Activated CD4-positive, alpha-beta T cell treated with anti-CD3 and anti-CD28 coated beads, Interleukin-2, amount 10 ng/mL, durations not matched to agents 24 days and 14 days (primary cell): ENCODE measurements at regions of chr16 and their contacts with region 1.

Region 1: GRCh38 chr16:2429034-2429770 is at the start of gene CCNF:
- DNase-seq: peak; percentile 99
- H3K4me3 Mint-ChIP-seq: peak within 1 kb of the TSS; percentile 91
- H3K27ac Mint-ChIP-seq: peak within 1 kb of the TSS; percentile 69
- H3K4me1 Mint-ChIP-seq: peaks cover 30% of the 10 kb centered on the region
- H3K27me3 Mint-ChIP-seq: no peaks in the 10 kb centered on the region
- total RNA-seq, gene CCNF: 44.7 and 45.7 TPM in 2 replicates

Region 2: GRCh38 chr16:2194852-2195321 is 234.3 kb before region 1 on chr16:
- intact Hi-C with region 1: loop called (anchors 10 kb)
- DNase-seq: peak; percentile 83
- H3K4me3 Mint-ChIP-seq: peak overlapping the region; percentile 42
- H3K27ac Mint-ChIP-seq: no peak overlapping the region
- H3K4me1 Mint-ChIP-seq: peaks cover 2% of the 10 kb centered on the region
- H3K27me3 Mint-ChIP-seq: peaks cover 34% of the 10 kb centered on the region

Region 3: DNA sequence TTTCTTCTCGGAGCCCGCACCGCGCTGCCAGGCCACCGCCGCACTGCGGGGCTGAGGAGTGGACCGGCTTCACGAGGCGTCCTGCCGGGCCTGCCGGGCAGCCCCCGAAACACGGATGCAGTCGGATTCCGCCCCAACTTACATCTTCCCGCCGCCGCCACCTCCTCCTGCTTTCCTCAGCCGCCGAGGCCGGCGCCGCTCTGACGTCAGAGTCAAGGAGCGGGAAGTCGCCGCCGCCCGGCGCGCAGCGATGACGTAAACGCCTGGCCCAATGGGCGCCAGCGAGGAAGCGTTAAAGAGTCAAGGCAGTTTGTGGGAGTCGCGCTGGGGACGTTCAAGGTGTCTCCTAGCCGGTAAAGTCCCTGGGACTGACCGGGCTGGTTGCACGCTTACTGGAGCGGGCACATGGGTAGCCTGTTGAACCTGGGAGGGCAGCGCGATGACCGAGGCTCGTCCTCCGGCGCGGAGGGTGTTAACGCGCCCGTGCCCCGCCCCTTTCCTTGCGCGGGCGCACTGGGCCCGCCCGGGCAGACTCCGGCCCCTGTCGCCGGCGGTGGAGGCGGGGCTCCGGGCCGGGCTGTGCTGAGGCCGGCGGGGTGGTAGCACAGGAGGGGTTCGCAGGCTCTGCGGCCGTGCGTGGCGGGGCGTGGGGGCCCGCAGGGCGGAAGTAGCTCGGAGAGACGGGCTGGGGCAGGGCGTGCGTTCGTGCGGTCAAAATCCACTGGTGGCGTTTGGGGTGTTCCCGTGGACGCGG is 161.1 kb before region 1 on chr16 and contains the start of gene RNPS1:
- intact Hi-C with region 1: loop called (anchors 2 kb)
- DNase-seq: peak; percentile 99
- H3K4me3 Mint-ChIP-seq: peak within 1 kb of the TSS; percentile 94
- H3K27ac Mint-ChIP-seq: peak within 1 kb of the TSS; percentile 97
- H3K4me1 Mint-ChIP-seq: peaks cover 27% of the 10 kb centered on the region
- H3K27me3 Mint-ChIP-seq: peaks cover 1% of the 10 kb centered on the region
- total RNA-seq, gene RNPS1: 399 and 416 TPM in 2 replicates

Region 4: GRCh38 chr16:2474877-2475412 is 45.7 kb after region 1 on chr16 and contains the start of gene TBC1D24:
- intact Hi-C with region 1: loop called (anchors 5 kb)
- DNase-seq: peak; percentile 95
- H3K4me3 Mint-ChIP-seq: peak within 1 kb of the TSS; percentile 80
- H3K27ac Mint-ChIP-seq: peak within 1 kb of the TSS; percentile 77
- H3K4me1 Mint-ChIP-seq: peaks cover 12% of the 10 kb centered on the region
- H3K27me3 Mint-ChIP-seq: peaks cover 25% of the 10 kb centered on the region
- total RNA-seq, gene TBC1D24: 16.6 and 20.9 TPM in 2 replicates

Region 5: DNA sequence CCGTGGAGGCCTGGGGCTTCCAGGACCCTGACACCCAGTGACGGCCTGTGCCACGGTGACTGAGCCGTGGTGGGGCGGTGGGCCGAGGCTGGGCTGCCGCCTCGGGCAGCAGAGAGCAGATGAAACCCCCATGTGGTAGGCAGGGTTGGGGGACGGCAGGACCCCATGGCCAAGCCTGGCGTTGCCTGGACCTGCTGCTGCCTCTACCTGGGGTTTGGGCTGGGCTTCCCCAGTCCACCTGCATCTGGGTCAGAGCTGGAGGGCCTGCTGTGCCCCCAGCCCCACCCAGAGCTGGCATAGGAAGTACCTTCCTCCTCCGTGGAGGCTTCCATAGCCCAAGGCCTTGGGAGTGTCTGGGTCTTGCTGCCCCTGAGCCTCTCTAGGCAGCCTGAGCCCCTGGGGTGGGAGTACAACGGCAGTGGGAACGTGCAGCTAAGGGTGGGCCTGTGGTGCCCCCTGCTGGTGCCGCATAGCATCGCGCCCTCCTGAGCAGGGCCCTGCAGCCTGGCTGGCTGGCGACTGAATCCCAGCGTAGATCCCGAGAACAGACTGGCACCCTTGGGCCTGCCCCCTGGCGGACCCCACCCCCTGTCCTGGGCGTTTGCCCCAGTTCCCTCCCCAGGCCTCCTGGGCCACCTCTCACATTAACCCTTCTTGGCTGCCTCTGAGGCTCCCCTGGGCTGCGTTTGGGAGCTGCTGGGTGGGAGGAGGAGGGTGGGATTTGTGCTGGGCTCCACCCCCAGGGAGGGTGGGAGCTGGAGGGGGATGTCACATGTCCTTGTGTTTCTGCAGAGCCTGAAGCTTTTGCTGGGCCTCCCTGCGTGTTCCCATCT is 71.9 kb after region 1 on chr16:
- intact Hi-C with region 1: loop called (anchors 5 kb)
- DNase-seq: peak; percentile 94
- H3K4me3 Mint-ChIP-seq: no peak overlapping the region
- H3K27ac Mint-ChIP-seq: no peak overlapping the region
- H3K4me1 Mint-ChIP-seq: no peaks in the 10 kb centered on the region
- H3K27me3 Mint-ChIP-seq: no peaks in the 10 kb centered on the region